HAP-1 (cell line): ENCODE measurements at regions of chr13 and their contacts with region 1.

Region 1: GRCh38 chr13:69857183-69857821 is 250.3 kb upstream of the ATXN8OS start:
- DNase-seq: peak in 1 of 2 experiments; percentile 71
- H3K4me3 ChIP-seq: no peak overlapping the region
- H3K4me1 ChIP-seq: peaks cover 5% of the 10 kb centered on the region
- H3K27me3 ChIP-seq: no peaks in the 10 kb centered on the region

Region 2: GRCh38 chr13:69524459-69525155 is 332.7 kb before region 1 on chr13:
- in situ Hi-C with region 1: loop called (anchors 25 kb)
- DNase-seq: peak in 1 of 2 experiments; percentile 35
- H3K4me3 ChIP-seq: no peak overlapping the region
- H3K4me1 ChIP-seq: peaks cover 3% of the 10 kb centered on the region; the same call in 1 of the 2 replicates
- H3K27me3 ChIP-seq: no peaks in the 10 kb centered on the region

Region 3: DNA sequence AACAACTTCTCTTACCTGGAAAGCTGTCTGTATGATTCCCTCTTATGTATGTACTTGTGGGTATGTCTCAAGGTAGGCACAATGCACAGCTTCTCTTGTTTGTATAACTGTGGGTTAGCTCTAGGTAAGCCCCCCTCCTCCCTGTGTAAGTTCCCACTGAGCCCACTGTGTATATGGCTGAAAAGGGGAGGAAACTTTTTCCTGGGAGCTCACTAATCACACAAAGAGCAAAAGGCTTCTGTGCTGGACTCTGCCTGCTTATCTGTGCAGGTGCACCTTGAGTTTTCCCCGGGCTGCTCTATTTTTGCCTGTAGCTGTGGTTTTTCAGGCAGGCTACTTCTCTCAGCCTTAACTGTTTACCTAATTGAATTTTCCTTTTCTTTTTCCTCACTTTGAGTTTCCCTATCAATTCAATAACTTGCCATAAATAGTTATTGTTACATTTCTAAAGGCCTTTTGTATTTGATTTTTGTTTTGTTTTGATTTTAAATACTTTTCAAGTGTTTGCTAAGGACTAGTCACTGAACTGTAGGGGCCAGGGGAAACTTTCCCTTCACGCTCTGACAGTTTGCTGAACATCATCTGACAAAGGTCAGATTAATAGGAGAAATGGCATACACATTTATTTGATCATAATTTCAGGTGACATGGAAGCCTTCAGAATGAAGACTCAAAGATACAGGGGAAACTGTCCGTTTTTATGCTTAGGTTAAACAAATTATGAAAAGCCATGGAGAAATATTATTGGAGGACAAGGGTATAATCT is 173.2 kb before region 1 on chr13:
- in situ Hi-C with region 1: no loop called
- DNase-seq: peak; percentile 48
- H3K4me3 ChIP-seq: no peak overlapping the region
- H3K4me1 ChIP-seq: peaks cover 35% of the 10 kb centered on the region
- H3K27me3 ChIP-seq: no peaks in the 10 kb centered on the region

Region 4: DNA sequence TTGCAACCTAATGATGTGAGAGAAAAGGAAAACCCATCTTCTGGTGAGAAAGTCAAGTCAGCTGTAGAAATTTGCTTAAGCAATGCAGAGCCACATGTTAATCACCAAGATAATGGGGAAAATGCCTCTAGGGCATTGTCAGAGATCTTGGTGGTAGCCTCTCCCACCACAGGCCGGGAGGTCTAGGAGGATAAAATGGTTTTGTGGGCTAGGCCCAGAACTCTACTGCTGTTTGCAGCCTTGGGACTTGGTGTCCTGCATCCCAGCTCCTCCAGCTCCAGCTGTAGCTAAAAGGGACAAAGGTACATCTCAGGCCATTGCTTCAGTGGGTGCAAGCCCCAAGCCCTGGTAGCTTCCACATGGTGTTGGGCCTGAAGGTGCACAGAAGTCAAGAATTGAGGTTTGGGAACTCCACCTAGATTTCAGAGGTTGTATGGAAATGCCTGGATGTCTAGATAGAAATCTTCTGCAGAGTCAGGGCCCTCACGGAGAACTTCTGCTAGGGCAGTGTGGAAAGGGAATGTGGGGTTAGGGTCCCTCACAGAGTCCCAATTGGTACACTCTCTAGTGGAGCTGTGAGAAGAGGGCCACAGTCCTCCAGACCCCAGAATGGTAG is 633.1 kb after region 1 on chr13:
- in situ Hi-C with region 1: no loop called
- DNase-seq: no peak
- H3K4me3 ChIP-seq: no peak overlapping the region
- H3K4me1 ChIP-seq: no peaks in the 10 kb centered on the region
- H3K27me3 ChIP-seq: no peaks in the 10 kb centered on the region

Region 5: DNA sequence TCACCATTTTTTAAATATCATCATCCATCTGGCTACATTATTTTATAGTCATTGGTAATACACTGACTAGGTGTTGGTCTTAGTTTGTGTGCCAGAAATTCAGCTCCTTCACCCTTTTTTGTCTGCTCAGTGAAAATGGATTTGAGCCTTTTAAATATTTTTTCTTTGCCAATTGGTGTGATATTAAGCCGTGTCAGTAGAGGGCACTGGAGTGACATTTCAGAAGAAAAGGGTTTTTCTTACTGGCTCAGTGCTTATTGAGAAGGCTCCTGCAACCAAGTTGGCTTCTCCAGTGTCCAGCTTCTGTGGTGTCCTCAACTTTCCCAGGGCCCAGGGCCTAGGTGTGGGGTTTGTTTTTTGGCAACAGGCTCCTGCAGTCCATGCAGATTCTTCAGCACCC is 1463.2 kb after region 1 on chr13:
- in situ Hi-C with region 1: no loop called
- DNase-seq: peak; percentile 43 to 46
- H3K4me3 ChIP-seq: no peak overlapping the region
- H3K4me1 ChIP-seq: peaks cover 14% of the 10 kb centered on the region
- H3K27me3 ChIP-seq: no peaks in the 10 kb centered on the region